Activated CD4-positive, alpha-beta T cell treated with anti-CD3 and anti-CD28 coated beads for 36 hours (primary cell): ENCODE measurements at regions of chr13 and their contacts with region 1.

Region 1: DNA sequence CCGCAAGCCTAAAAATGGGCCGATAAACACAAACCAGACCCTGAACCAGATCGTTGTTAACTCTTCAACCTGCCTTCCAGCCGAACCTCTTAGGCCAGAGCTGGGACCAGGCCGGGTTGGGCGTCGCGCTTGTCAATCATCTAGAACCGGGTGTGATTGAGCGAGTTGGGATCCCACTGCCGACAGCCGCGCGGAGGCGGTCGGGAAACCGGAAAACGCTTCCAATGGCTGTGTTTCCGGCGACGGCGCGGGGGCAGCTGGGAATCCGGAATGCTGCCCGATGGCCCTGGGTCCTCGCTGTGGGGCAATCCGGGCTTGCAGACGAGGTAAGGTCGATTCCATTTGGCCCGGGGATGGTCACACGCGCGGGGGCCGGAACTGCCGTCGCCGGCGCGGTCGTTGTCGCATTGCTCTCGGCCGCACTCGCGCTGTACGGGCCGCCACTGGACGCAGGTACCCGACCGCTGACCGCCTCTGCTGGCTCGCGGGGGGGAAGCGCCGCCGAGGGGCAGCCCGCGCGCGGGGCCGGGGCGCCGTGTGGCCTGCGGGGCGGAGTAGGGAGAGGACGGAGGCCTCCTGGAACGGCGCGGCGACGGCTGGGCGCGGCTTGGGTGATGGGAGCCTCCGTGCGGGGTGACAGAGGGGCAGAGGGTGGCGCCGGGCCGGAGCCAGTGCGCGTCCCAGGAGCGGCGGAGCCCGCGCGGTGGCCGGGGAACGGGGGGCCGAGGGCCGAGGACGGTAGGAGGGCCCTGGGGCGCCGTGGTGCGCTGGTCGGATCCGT is at the start of gene NAXD:
- DNase-seq: peak; percentile 92
- ATAC-seq: peak; percentile 94
- H3K4me3 Mint-ChIP-seq: peak within 1 kb of the TSS; percentile 88
- H3K27ac Mint-ChIP-seq: peak within 1 kb of the TSS; percentile 96
- H3K4me1 Mint-ChIP-seq: peaks cover 41% of the 10 kb centered on the region
- H3K27me3 Mint-ChIP-seq: no peaks in the 10 kb centered on the region
- total RNA-seq, gene NAXD: 19.6 to 23.3 TPM

Region 2: DNA sequence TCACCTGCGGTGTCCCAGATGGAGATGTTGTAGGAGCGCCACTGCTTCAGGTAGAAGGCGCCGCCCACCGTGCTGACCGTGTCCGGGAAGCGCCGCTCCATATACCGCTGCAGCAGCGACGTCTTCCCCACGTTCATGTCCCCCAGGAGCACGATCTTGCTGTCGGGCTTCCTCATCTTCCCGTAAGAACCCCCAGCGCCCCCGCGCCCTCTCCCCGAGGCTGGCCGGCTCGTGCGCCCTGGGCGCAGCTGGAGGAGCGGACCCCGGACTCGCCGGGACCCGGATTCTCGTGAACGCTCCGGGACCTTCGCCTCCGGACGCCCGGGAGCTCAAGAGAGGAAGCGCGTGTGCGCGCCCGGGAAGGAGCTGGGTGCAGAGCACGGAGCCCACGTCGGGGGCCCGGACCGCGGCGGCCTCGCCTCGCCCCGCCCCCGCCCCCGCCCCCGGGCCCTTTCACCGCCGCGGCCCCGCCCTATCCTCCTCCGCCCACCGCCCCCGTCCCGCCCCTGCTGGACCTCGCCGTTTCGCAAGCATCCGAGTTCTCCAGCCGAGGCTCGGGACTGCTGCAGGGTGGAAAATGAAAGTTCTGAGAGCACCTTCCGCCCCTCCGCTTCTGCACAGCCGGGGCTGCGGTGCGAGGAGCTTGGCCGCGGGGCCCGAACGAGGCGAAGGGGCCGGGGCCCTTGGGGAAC is 54.0 kb before region 1 on chr13 and contains the start of gene RAB20:
- CTCF ChIA-PET with region 1: no interaction called
- POLR2A ChIA-PET with region 1: no interaction called
- intact Hi-C with region 1: loop called (anchors 1 to 2 kb)
- DNase-seq: peak; percentile 76
- ATAC-seq: peak; percentile 79
- H3K4me3 Mint-ChIP-seq: peak within 1 kb of the TSS; percentile 77
- H3K27ac Mint-ChIP-seq: peak within 1 kb of the TSS; percentile 85
- H3K4me1 Mint-ChIP-seq: peaks cover 18% of the 10 kb centered on the region
- H3K27me3 Mint-ChIP-seq: peaks cover 4% of the 10 kb centered on the region
- total RNA-seq, gene RAB20: 6.0 to 9.0 TPM

Region 3: GRCh38 chr13:110705826-110706569 is 90.5 kb after region 1 on chr13 and contains the start of gene CARS2:
- CTCF ChIA-PET with region 1: no interaction called
- POLR2A ChIA-PET with region 1: no interaction called
- intact Hi-C with region 1: loop called in 1 of 2 experiments (anchors 1 kb)
- DNase-seq: peak; percentile 98
- ATAC-seq: peak; percentile 96
- H3K4me3 Mint-ChIP-seq: peak within 1 kb of the TSS; percentile 89
- H3K27ac Mint-ChIP-seq: peak within 1 kb of the TSS; percentile 80
- H3K4me1 Mint-ChIP-seq: peaks cover 34% of the 10 kb centered on the region
- H3K27me3 Mint-ChIP-seq: no peaks in the 10 kb centered on the region
- total RNA-seq, gene CARS2: 52.1 to 55.8 TPM

Region 4: DNA sequence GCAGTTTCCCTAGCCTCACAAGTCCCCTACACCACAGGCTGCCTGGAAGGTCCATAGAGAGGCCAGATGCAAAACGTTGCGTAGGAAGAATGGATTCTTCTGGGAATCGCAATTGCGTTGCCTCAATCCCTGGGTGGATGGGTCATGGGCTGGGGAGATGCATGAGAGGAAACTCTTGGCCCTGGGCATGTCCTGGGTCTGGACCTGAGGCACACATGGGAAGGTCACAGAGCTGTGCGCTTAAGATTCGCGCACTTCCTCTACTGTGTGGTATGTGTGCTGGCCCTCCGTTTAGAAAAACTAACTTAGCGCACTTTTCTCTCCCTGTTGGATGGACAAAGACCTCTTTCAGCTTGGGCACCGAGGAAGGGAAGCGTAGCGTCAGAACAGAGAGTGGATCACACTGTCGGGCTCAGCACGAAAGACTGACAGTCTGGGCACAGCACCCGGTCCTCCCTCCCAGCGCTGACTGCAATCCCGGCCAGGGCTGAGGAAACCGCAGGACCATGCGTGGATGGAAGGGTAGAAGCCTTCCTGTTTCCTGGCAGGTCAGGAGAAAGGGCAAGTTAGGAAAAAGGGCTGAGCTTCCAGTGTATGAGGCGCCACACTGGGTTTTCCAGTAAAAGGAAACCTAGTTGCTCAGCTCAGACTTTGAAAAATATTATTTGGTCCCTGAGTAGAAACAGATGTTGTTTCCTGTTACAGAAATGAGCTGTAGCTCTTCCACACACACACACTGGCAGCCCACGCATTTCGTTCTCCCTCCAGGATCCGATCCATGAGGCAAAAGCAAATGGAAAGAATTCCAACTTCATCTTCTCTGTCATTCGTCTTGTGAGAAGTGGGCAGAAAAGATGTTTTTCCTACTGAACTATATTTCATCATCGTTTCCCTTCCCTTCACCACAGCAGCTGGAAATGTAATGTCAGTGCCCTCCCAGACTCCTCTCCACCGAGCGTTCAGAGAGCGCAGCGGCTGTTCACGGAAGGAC is 184.0 kb after region 1 on chr13:
- CTCF ChIA-PET with region 1: no interaction called
- POLR2A ChIA-PET with region 1: no interaction called
- intact Hi-C with region 1: no loop called
- DNase-seq: no peak
- ATAC-seq: no peak
- H3K4me3 Mint-ChIP-seq: peak overlapping the region; percentile 19
- H3K27ac Mint-ChIP-seq: no peak overlapping the region
- H3K4me1 Mint-ChIP-seq: peaks cover 8% of the 10 kb centered on the region
- H3K27me3 Mint-ChIP-seq: peaks cover 41% of the 10 kb centered on the region

Region 5: DNA sequence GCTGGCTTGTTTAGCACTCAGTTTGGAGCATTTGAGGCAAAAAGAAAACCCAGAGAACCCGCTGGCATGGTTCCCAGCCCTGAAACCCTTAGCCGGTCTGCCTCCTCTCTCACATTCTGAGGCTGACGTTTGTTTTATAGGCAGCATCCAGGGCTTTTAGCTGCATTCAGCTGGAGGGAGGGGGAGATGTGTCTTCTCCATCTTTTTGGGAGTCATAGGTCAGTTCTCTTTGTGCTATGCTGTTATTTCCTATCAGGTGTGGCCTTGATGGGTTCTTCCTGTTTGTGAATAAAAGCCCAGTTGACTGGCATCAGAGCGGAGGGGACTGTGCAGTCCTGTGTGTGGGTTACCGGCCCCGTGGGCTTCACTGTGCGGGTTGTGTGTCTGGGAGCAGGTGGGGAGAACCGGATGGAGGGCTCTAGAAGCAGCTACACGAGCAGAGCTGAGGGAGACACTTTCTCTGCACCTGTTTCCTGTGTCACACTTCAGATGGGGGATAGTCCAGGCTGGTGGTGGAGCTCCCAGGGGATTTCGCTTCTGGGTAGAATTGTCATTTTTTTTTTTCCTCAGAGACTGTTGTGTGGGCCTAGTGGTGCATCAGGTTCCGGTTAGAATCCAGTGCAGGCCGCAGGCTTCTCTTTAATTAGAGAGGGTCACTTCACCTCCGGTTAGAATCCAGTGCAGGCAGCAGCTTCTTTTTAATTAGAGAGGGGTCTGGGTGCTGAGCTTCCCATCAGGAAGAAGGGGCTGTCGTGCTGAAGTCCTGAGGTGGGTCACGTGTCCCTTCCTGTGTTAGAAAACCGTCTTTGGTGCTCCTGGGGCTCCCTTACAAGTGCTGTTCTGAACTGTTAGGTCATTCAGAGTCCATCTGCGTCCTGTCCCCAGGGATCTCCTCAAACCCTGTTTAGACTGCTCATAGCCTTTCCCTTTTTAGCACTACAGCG is 569.2 kb after region 1 on chr13:
- CTCF ChIA-PET with region 1: no interaction called
- POLR2A ChIA-PET with region 1: no interaction called
- intact Hi-C with region 1: loop called in 1 of 2 experiments (anchors 10 kb)
- DNase-seq: peak; percentile 55
- ATAC-seq: peak; percentile 69
- H3K4me3 Mint-ChIP-seq: peak overlapping the region; percentile 53
- H3K27ac Mint-ChIP-seq: peak overlapping the region; percentile 83
- H3K4me1 Mint-ChIP-seq: peaks cover 95% of the 10 kb centered on the region
- H3K27me3 Mint-ChIP-seq: no peaks in the 10 kb centered on the region